GM10248 (cell line): ENCODE measurements at regions of chr11 and their contacts with region 1.

Region 1: DNA sequence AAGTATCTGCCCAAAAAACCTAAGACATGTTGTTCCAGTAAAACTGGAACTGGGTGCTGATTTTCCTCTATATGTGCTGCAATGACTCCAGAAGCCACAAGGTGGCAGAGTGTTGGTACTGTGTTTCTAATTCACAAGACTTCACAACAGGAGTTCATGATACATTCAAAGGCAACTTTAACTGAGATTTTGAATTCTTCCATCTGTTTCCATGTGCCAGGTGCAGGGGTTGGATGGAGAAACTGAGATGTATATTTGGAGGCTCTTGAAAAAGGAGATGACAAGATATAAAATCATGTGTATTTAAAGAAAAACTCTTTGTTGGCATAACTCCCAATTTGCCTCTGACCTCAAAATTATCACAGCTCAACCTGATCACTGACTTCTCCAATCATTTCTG is 1098.6 kb upstream of the CCDC90B start:
- DNase-seq: peak; percentile 22
- CTCF ChIP-seq: peak; percentile 82

Region 2: DNA sequence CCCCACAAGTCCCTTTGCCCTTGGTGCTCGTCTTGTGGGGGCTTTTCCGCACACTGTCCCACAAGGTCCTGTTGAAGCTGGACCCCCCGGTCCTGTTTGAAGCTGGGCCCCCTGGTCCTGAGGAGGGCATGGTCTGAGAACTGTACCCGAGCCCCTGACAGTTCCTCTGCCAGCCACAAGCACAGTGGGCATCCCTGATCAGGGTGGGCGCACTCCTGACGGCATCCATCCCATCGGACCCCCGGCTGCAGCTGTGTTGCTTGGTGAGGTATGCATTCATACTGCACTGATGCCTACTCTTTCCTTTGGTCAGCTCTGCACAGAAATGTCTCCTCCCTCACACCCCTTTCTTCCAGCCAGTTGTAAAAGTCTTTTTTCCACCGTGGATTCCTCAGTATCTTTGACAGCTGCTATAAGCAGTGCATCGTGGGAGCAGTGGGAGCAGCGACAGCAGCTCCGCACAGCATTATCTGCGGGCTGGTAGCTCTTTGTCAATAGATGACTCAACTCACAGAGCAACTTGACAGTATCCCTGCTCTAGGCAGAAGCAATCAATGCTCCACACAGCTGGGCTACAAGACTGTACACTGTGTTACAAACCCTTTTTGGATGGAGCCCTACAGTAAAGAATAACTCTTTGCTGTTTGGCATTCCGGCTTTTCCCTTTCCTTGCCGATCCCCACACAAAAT is 67.7 kb before region 1 on chr11:
- CTCF ChIA-PET with region 1: no interaction called
- POLR2A ChIA-PET with region 1: no interaction called
- DNase-seq: no peak
- CTCF ChIP-seq: no peak

Region 3: GRCh38 chr11:84355911-84356310 is 28.8 kb before region 1 on chr11:
- CTCF ChIA-PET with region 1: no interaction called
- POLR2A ChIA-PET with region 1: no interaction called
- DNase-seq: no peak
- CTCF ChIP-seq: no peak

Region 4: GRCh38 chr11:84398017-84398626 is 13.4 kb after region 1 on chr11:
- CTCF ChIA-PET with region 1: interaction called, 26 read pairs
- POLR2A ChIA-PET with region 1: no interaction called
- DNase-seq: no peak
- CTCF ChIP-seq: no peak

Region 5: GRCh38 chr11:84420271-84420670 is 35.5 kb after region 1 on chr11:
- CTCF ChIA-PET with region 1: no interaction called
- POLR2A ChIA-PET with region 1: no interaction called
- DNase-seq: no peak
- CTCF ChIP-seq: no peak

Region 6: GRCh38 chr11:84501750-84502149 is 117.0 kb after region 1 on chr11:
- CTCF ChIA-PET with region 1: no interaction called
- POLR2A ChIA-PET with region 1: no interaction called
- DNase-seq: no peak
- CTCF ChIP-seq: no peak